Calu3 (cell line): ENCODE measurements at regions of chr7 and their contacts with region 1.

Region 1: DNA sequence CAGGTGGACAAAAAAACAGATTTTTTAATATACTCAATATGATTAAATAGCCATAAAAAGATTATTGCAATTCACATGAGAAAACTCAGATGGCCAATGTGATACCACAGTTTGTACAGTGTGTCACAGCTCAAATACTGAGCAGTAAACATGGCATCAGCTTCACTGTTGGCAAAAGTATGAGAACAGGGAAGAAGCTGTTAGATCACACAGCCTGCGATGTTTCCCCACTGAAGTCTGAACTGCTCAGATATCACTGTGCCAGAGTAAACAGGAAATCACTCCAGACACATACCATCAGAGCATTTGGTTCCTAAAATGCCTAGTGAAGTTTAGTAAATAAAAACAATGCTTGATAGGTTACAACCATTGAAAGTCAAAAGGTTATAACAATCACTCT is 347.8 kb downstream of the ETV1 start:
- DNase-seq: no peak
- H3K4me3 Mint-ChIP-seq: no peak overlapping the region
- H3K27ac Mint-ChIP-seq: no peak overlapping the region
- H3K4me1 Mint-ChIP-seq: no peaks in the 10 kb centered on the region
- H3K27me3 Mint-ChIP-seq: no peaks in the 10 kb centered on the region
- CTCF ChIP-seq: no peak

Region 2: GRCh38 chr7:13179102-13179501 is 462.6 kb before region 1 on chr7:
- CTCF ChIA-PET with region 1: no interaction called
- intact Hi-C with region 1: no loop called
- DNase-seq: no peak
- H3K4me3 Mint-ChIP-seq: no peak overlapping the region
- H3K27ac Mint-ChIP-seq: no peak overlapping the region
- H3K4me1 Mint-ChIP-seq: peaks cover 13% of the 10 kb centered on the region
- H3K27me3 Mint-ChIP-seq: no peaks in the 10 kb centered on the region
- CTCF ChIP-seq: no peak

Region 3: GRCh38 chr7:13563257-13563656 is 78.5 kb before region 1 on chr7:
- CTCF ChIA-PET with region 1: interaction called, 13 read pairs
- intact Hi-C with region 1: no loop called
- DNase-seq: no peak
- H3K4me3 Mint-ChIP-seq: no peak overlapping the region
- H3K27ac Mint-ChIP-seq: no peak overlapping the region
- H3K4me1 Mint-ChIP-seq: no peaks in the 10 kb centered on the region
- H3K27me3 Mint-ChIP-seq: no peaks in the 10 kb centered on the region
- CTCF ChIP-seq: no peak

Region 4: GRCh38 chr7:13628239-13629001 is 13.3 kb before region 1 on chr7:
- CTCF ChIA-PET with region 1: no interaction called
- intact Hi-C with region 1: no loop called
- DNase-seq: no peak
- H3K4me3 Mint-ChIP-seq: no peak overlapping the region
- H3K27ac Mint-ChIP-seq: no peak overlapping the region
- H3K4me1 Mint-ChIP-seq: no peaks in the 10 kb centered on the region
- H3K27me3 Mint-ChIP-seq: no peaks in the 10 kb centered on the region
- CTCF ChIP-seq: no peak

Region 5: DNA sequence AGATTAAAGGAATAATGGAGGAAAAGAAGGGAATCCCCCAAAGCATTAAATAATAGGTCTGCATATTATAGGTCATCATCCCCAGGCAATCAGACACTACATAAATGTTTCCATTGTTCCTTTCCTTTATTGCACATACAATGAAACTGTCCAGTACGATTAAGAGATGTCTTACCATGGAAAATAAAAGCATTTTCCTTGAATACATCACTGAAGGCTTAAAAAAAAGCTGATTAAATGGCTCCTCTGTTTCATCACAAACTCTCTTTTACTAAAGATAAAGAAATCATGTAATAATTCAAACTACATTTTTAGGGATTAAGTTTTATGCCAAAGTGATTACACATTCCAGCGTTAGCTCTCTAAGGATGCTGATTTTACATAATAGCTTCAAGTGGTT is 1604.1 kb after region 1 on chr7:
- CTCF ChIA-PET with region 1: no interaction called
- intact Hi-C with region 1: no loop called
- DNase-seq: no peak
- H3K4me3 Mint-ChIP-seq: no peak overlapping the region
- H3K27ac Mint-ChIP-seq: no peak overlapping the region
- H3K4me1 Mint-ChIP-seq: no peaks in the 10 kb centered on the region
- H3K27me3 Mint-ChIP-seq: no peaks in the 10 kb centered on the region
- CTCF ChIP-seq: no peak